ENCODE measurements at regions of chr12 and their contacts with region 1.

Region 1: DNA sequence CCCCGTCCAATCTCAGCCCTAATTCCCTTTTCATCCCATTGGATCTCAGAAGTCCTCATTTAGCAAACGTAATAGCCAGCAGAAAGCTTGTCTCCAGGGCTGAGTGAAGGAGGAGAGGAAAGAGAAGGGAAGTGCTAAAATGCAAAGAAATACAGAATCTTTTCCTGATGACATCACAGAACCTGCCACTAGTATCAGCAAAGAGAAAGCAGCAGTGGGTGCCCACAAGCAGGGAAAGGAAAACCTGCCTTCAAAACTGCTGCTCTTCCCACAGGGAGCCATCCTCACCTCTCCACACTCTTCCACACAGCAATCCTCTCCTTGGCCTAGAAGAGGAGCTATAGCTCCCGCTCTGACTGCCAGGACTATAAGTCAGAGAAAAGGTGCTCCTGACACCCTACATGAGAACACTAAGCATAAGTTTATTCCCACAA is 11.3 kb downstream of the MED13L start:
- DNase-seq: no peak
- ATAC-seq: peak; percentile 96
- H3K4me3 Mint-ChIP-seq: no peak overlapping the region
- H3K27ac Mint-ChIP-seq: no peak overlapping the region
- H3K4me1 Mint-ChIP-seq: peaks cover 28% of the 10 kb centered on the region
- H3K27me3 Mint-ChIP-seq: no peaks in the 10 kb centered on the region
- CTCF ChIP-seq: no peak

Region 2: GRCh38 chr12:116276652-116277221 is 10.6 kb after region 1 on chr12:
- CTCF ChIA-PET with region 1: interaction called, 10 read pairs
- POLR2A ChIA-PET with region 1: no interaction called
- DNase-seq: peak; percentile 61
- ATAC-seq: peak; percentile 3; the same call in 1 of the 2 replicates
- H3K4me3 Mint-ChIP-seq: peak overlapping the region; percentile 98
- H3K27ac Mint-ChIP-seq: peak overlapping the region; percentile 95
- H3K4me1 Mint-ChIP-seq: peaks cover 58% of the 10 kb centered on the region
- H3K27me3 Mint-ChIP-seq: peaks cover 4% of the 10 kb centered on the region; the same call in 1 of the 2 replicates
- CTCF ChIP-seq: no peak